ENCODE measurements at regions of chr3 and their contacts with region 1.

Region 1: DNA sequence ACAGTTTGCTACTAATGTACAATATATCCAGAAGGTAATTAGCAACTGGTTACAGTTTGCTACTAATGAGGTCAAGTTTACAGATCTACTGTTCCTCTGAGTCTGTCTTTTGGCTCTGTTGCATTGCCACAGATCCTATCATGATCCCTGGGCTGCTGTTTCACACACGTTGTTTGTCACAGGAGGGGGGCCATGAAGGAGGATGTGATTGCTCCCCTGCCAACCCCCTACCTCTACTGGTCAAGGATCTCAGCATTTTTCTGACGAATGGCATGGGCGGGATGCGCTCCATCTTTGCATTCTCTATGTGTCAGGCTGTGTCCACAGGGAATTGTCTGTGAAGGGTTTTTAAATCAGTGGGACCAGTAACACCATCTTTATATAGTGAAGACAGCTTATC is 91.9 kb downstream of the CHL1 start:
- DNase-seq: no peak
- ATAC-seq: no peak
- H3K4me3 ChIP-seq: no peak overlapping the region
- H3K27ac ChIP-seq: no peak overlapping the region
- H3K4me1 ChIP-seq: peaks cover 10% of the 10 kb centered on the region
- H3K27me3 ChIP-seq: no peaks in the 10 kb centered on the region
- CTCF ChIP-seq: no peak
- EP300 ChIP-seq: no peak
- POLR2A ChIP-seq: no peak
- RAD21 ChIP-seq: no peak

Region 2: GRCh38 chr3:270688-271087 is 17.7 kb before region 1 on chr3:
- CTCF ChIA-PET with region 1: interaction called, 3 read pairs
- POLR2A ChIA-PET with region 1: no interaction called
- RAD21 ChIA-PET with region 1: interaction called, 22 read pairs
- SMC1A ChIA-PET with region 1: interaction called, 28 read pairs
- in situ Hi-C with region 1: no loop called
- intact Hi-C with region 1: no loop called
- DNase-seq: no peak
- ATAC-seq: peak; percentile 72
- H3K4me3 ChIP-seq: no peak overlapping the region
- H3K27ac ChIP-seq: no peak overlapping the region
- H3K4me1 ChIP-seq: no peaks in the 10 kb centered on the region
- H3K27me3 ChIP-seq: no peaks in the 10 kb centered on the region
- CTCF ChIP-seq: no peak
- EP300 ChIP-seq: no peak
- POLR2A ChIP-seq: no peak
- RAD21 ChIP-seq: no peak

Region 3: DNA sequence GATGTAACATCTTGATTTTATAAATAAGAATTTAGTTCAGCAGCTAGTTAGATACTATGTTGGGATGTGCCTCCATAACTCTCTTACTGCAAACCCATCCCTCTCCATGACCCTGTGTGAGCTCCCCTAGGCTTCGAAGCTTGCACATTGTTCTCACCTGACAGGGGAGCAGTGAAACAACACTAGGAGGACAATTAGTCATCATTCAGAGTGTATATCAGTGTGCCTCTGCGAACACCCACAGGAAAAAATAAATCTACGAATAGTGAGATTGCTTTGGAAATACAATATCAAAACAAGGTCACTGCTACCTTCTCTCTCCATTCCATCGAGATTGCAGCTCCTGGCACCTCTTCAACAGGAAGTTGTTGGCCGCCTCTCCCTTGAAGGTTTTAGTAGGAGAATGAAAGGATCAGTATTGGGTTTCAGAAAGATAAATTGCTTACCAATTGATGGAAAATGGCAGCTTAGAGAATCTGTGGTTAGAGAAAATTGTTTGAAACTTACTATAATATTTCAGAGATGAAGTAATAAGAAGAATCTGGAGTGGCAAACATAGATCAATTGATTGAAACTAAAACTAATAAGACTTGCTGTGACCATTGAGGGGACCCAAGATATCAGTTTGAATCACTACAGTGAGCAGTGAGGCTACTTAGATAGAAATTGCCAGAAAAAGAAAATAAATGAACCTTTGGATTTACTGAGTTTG is 11.3 kb after region 1 on chr3:
- CTCF ChIA-PET with region 1: interaction called, 6 read pairs
- POLR2A ChIA-PET with region 1: interaction called, 6 read pairs
- RAD21 ChIA-PET with region 1: interaction called, 19 read pairs
- SMC1A ChIA-PET with region 1: interaction called, 31 read pairs
- in situ Hi-C with region 1: no loop called
- intact Hi-C with region 1: no loop called
- DNase-seq: no peak
- ATAC-seq: peak; percentile 94
- H3K4me3 ChIP-seq: no peak overlapping the region
- H3K27ac ChIP-seq: no peak overlapping the region
- H3K4me1 ChIP-seq: no peaks in the 10 kb centered on the region
- H3K27me3 ChIP-seq: no peaks in the 10 kb centered on the region
- CTCF ChIP-seq: no peak
- EP300 ChIP-seq: peak in 1 of 2 experiments; percentile 18; a peak in 1 of 4 replicates
- POLR2A ChIP-seq: no peak
- RAD21 ChIP-seq: no peak

Region 4: GRCh38 chr3:436053-436452 is 147.6 kb after region 1 on chr3:
- CTCF ChIA-PET with region 1: no interaction called
- POLR2A ChIA-PET with region 1: no interaction called
- RAD21 ChIA-PET with region 1: no interaction called
- SMC1A ChIA-PET with region 1: no interaction called
- in situ Hi-C with region 1: no loop called
- intact Hi-C with region 1: no loop called
- DNase-seq: no peak
- ATAC-seq: no peak
- H3K4me3 ChIP-seq: no peak overlapping the region
- H3K27ac ChIP-seq: no peak overlapping the region
- H3K4me1 ChIP-seq: no peaks in the 10 kb centered on the region
- H3K27me3 ChIP-seq: no peaks in the 10 kb centered on the region
- CTCF ChIP-seq: no peak
- EP300 ChIP-seq: no peak
- POLR2A ChIP-seq: no peak
- RAD21 ChIP-seq: no peak